ENCODE measurements at regions of chr11 and their contacts with region 1.

Region 1: GRCh38 chr11:86456052-86456939 is 81.6 kb downstream of the CCDC81 start:
- DNase-seq: peak; percentile 87
- H3K4me3 ChIP-seq: no peak overlapping the region
- H3K27ac ChIP-seq: peak overlapping the region; percentile 72
- H3K4me1 ChIP-seq: peaks cover 53% of the 10 kb centered on the region
- H3K27me3 ChIP-seq: no peaks in the 10 kb centered on the region
- CTCF ChIP-seq: peak; percentile 80 to 86
- POLR2A ChIP-seq: no peak

Region 2: DNA sequence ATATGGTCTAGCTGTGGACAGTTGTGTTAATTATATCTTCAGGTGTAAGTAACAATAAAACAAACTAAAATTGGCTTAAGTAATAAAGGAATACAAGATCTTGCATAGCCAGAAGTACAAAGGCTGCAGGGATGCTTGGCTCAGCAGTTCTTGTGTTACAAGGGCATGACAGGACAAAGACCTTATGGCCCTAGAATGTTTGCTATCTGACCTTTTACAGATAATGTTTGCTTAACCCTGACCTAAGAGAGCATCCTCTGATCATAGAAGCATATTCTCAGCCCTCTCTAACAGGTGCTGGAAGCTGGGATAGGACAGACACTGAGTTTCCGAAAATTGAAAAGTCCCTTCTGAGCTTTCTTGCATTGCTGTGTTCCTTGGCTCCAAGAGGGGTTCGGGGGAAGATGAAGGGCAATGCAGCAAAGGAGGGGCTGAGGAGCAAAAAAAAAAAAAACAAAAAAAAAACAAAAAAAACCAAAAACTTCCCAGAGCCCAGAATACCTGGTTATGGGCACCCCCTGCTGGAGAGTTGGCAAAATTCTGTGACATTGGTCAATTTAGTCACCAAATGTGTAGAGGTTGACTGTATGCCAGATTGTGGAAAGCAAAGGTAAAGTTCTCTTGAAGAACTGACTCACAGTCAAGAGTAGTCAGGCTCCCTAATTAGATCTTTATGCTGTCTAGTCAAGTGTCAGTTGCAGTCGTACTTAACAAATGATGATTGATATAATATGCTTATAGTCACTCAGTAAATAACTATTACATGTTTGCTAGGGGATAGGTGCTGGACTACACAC is 164.6 kb before region 1 on chr11:
- CTCF ChIA-PET with region 1: no interaction called
- POLR2A ChIA-PET with region 1: no interaction called
- dilution Hi-C with region 1: no loop called
- intact Hi-C with region 1: no loop called
- DNase-seq: peak; percentile 49
- H3K4me3 ChIP-seq: no peak overlapping the region
- H3K27ac ChIP-seq: no peak overlapping the region
- H3K4me1 ChIP-seq: no peaks in the 10 kb centered on the region
- H3K27me3 ChIP-seq: peaks cover 0 to 3% of the 10 kb centered on the region in 2 experiments
- CTCF ChIP-seq: peak; percentile 59 to 68
- POLR2A ChIP-seq: no peak

Region 3: DNA sequence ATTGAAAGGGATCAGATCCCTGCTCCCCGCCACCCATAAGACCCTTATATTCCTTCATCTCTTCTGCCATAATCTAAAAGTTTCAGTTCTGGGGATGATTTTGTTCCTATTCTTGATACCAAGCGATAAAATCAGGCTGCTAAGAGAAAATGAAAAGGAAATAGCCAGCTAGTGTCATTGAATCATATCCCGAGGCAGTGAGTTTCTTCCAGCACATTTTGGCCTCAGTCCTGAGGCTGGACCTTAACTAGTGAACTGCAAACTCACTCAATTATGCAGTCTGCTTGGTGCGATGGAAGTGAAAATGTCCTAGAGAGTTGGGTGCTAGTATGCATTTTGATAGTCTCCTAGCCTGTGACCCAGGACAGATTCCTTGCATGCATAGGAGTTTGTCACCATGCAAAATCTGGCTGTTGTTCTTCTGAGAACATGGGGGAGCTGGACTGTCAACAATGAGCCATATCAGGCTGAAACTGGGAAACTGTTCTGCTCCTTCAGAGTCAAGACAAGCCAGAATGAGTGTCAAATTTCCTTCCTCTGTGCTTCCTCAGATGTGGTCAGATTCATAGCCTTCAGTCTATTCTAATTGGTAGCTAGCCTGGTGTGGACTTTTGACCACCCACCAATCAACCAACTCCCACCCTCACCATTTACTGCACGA is 21.3 kb after region 1 on chr11:
- CTCF ChIA-PET with region 1: interaction called, 6 read pairs
- POLR2A ChIA-PET with region 1: interaction called, 5 read pairs
- dilution Hi-C with region 1: no loop called
- intact Hi-C with region 1: loop called (anchors 1 kb)
- DNase-seq: peak; percentile 84
- H3K4me3 ChIP-seq: no peak overlapping the region
- H3K27ac ChIP-seq: peak overlapping the region; percentile 85
- H3K4me1 ChIP-seq: peaks cover 61% of the 10 kb centered on the region
- H3K27me3 ChIP-seq: no peaks in the 10 kb centered on the region
- CTCF ChIP-seq: no peak
- POLR2A ChIP-seq: peak; percentile 67

Region 4: DNA sequence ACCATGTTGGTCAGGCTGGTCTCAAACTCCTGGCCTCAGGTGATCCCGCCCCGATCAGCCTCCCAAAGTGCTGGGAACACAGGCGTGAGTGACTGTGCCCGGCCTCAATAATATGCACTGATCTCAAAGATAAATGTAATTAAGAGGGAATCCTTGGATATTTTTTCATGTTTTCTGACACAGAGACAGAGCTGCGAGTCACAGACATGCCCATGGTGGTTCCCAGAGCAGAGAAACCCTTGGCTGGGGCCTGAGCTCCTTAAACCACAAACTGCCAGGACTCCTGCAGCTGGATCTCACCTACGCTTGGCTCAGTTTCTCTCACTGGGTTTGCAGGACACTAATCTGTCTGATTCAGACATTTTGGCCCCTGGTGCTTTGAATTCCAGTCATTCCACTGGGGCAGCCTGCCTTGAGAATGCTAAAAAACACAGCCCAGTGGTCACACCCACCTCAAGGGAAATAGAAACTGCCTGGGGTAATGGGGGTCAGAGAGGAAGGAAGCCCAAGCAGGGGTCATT is 40.9 kb after region 1 on chr11:
- CTCF ChIA-PET with region 1: no interaction called
- POLR2A ChIA-PET with region 1: no interaction called
- dilution Hi-C with region 1: no loop called
- intact Hi-C with region 1: no loop called
- DNase-seq: no peak
- H3K4me3 ChIP-seq: no peak overlapping the region
- H3K27ac ChIP-seq: no peak overlapping the region
- H3K4me1 ChIP-seq: peaks cover 7% of the 10 kb centered on the region
- H3K27me3 ChIP-seq: no peaks in the 10 kb centered on the region
- CTCF ChIP-seq: no peak
- POLR2A ChIP-seq: no peak

Region 5: GRCh38 chr11:86551286-86552092 is 95.2 kb after region 1 on chr11:
- CTCF ChIA-PET with region 1: interaction called, 5 read pairs
- POLR2A ChIA-PET with region 1: no interaction called
- dilution Hi-C with region 1: no loop called
- intact Hi-C with region 1: loop called (anchors 1 kb)
- DNase-seq: peak; percentile 96
- H3K4me3 ChIP-seq: no peak overlapping the region
- H3K27ac ChIP-seq: peak overlapping the region; percentile 71
- H3K4me1 ChIP-seq: peaks cover 44% of the 10 kb centered on the region
- H3K27me3 ChIP-seq: no peaks in the 10 kb centered on the region
- CTCF ChIP-seq: no peak
- POLR2A ChIP-seq: no peak

Region 6: GRCh38 chr11:86608251-86608799 is 152.0 kb after region 1 on chr11:
- CTCF ChIA-PET with region 1: interaction called, 53 read pairs
- POLR2A ChIA-PET with region 1: interaction called, 4 read pairs
- dilution Hi-C with region 1: no loop called
- intact Hi-C with region 1: loop called (anchors 1 kb)
- DNase-seq: peak; percentile 91
- H3K4me3 ChIP-seq: peak overlapping the region in 1 of 3 experiments; percentile 10
- H3K27ac ChIP-seq: peak overlapping the region; percentile 87
- H3K4me1 ChIP-seq: peaks cover 37% of the 10 kb centered on the region
- H3K27me3 ChIP-seq: no peaks in the 10 kb centered on the region
- CTCF ChIP-seq: peak; percentile 77 to 85
- POLR2A ChIP-seq: no peak

Region 7: DNA sequence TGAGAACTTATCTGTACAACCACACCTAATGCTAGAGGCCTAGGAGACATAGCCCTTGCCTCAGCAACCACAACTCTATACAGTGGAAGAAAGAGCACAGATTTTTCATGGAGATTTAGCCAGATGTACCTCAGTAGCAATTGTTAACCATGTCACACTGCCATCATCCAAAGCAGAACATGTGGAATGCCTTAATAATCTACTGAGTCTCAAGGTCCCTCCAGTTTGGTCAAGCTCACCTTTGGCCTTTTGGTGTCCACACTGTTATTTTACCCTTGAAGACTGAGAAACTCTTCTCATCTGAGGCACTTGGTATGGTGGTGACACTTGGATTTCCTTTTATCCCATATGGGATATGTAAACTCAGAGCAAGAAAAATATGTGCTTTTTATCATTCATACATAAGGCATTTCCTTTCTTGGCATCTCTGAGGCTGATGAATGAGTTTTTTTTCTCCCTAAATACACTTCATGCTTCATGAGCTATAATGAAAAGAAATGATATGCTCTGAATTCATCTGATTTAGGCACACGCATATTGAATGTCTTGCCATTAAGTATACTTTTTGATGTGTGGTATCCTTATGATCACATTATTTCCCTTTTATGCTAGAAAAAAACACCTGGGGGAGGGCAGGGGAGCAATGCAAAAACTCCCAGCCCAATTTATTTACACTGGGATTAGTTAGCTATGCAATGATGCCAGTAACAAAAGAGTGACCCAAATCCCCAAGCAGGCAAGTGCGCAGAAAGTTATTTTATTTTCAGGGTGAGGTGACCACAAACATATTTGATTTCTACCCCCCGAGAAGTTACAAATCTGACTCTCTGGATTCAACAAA is 279.4 kb after region 1 on chr11:
- CTCF ChIA-PET with region 1: interaction called, 3 read pairs
- POLR2A ChIA-PET with region 1: no interaction called
- dilution Hi-C with region 1: no loop called
- intact Hi-C with region 1: loop called (anchors 1 kb)
- DNase-seq: peak; percentile 78
- H3K4me3 ChIP-seq: no peak overlapping the region
- H3K27ac ChIP-seq: peak overlapping the region; percentile 93
- H3K4me1 ChIP-seq: peaks cover 55% of the 10 kb centered on the region
- H3K27me3 ChIP-seq: no peaks in the 10 kb centered on the region
- CTCF ChIP-seq: no peak
- POLR2A ChIP-seq: peak; percentile 39

Region 8: GRCh38 chr11:86861810-86862209 is 405.5 kb after region 1 on chr11:
- CTCF ChIA-PET with region 1: no interaction called
- POLR2A ChIA-PET with region 1: no interaction called
- dilution Hi-C with region 1: no loop called
- intact Hi-C with region 1: loop called (anchors 5 kb)
- DNase-seq: no peak
- H3K4me3 ChIP-seq: no peak overlapping the region
- H3K27ac ChIP-seq: no peak overlapping the region
- H3K4me1 ChIP-seq: no peaks in the 10 kb centered on the region
- H3K27me3 ChIP-seq: no peaks in the 10 kb centered on the region
- CTCF ChIP-seq: no peak
- POLR2A ChIP-seq: no peak